ENCODE measurements at regions of chr2 and their contacts with region 1.

Region 1: DNA sequence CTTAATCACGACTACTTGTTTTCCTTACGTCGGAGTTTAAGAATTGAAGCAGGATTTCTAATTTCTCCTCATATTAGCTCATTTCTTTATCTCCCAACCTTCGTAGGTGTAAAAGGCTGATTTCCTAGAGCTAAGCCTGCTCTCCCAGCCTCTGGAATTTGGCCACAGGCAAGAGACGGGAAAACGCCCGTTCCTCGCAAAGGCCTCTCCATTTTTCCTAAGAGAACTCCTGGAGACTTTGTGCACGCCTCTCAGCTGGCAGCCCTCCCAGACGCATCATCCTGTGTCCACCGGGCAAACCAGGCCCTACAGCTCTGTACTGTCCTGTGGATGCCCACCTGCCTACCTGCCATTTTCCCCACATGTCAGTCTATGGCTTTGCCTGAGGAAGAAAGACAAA is 106.3 kb downstream of the FTCDNL1 start:
- DNase-seq: no peak
- H3K4me3 ChIP-seq: no peak overlapping the region
- H3K27ac ChIP-seq: no peak overlapping the region
- H3K4me1 ChIP-seq: peaks cover 4% of the 10 kb centered on the region
- H3K27me3 ChIP-seq: no peaks in the 10 kb centered on the region
- CTCF ChIP-seq: no peak
- POLR2A ChIP-seq: no peak

Region 2: DNA sequence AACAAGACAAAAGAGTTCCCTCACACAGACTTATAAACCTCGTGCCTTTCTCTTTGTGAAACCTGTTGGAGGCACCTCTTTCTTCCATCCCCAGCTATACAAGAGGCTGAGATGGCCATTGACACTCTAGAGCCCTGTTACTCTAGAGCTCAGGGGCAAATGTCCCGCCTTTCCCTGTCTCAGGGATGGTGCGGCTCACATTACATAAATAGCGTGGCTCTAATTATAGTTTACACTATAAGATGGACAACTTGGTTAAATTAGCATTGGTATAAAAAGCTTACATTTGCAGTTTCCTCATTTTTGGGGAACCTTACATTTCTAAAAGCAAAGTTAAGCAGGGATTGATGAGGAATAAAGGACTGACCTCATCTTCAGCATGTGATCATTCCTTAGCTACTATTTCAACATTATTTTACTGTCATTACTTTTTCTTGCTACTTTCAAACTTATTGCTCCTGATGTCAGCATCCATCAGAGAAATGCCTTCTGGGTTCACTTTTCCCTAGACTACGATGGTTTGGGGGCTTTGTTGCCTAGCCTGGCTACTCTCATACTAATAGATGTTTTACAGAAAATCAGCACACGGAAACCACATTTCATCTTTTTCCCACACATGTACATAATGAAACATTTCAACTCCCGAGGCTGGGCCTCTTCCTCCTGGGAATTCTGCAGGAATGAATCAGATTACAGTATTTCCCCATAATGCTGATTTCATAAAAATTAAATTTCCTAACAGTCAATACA is 65.9 kb after region 1 on chr2:
- intact Hi-C with region 1: loop called (anchors 5 kb)
- DNase-seq: no peak
- H3K4me3 ChIP-seq: no peak overlapping the region
- H3K27ac ChIP-seq: no peak overlapping the region
- H3K4me1 ChIP-seq: no peaks in the 10 kb centered on the region
- H3K27me3 ChIP-seq: no peaks in the 10 kb centered on the region
- CTCF ChIP-seq: no peak
- POLR2A ChIP-seq: no peak

Region 3: GRCh38 chr2:200329798-200330197 is 585.1 kb after region 1 on chr2:
- intact Hi-C with region 1: no loop called
- DNase-seq: no peak
- H3K4me3 ChIP-seq: no peak overlapping the region
- H3K27ac ChIP-seq: no peak overlapping the region
- H3K4me1 ChIP-seq: no peaks in the 10 kb centered on the region
- H3K27me3 ChIP-seq: no peaks in the 10 kb centered on the region
- CTCF ChIP-seq: no peak
- POLR2A ChIP-seq: no peak

Measured in prostate gland (tissue), 2 donors.